ENCODE measurements at regions of chr16 and their contacts with region 1.

Region 1: GRCh38 chr16:2874912-2875362 is 8.1 kb upstream of the FLYWCH2 start:
- DNase-seq: peak; percentile 60 to 87
- ATAC-seq: peak; percentile 98 to 100 (median 100)
- H3K4me3 ChIP-seq: no peak overlapping the region
- H3K4me3 Mint-ChIP-seq: no peak overlapping the region
- H3K27ac ChIP-seq: no peak overlapping the region
- H3K27ac Mint-ChIP-seq: no peak overlapping the region
- H3K4me1 ChIP-seq: peaks cover 10% of the 10 kb centered on the region
- H3K4me1 Mint-ChIP-seq: no peaks in the 10 kb centered on the region
- H3K27me3 ChIP-seq: no peaks in the 10 kb centered on the region
- H3K27me3 Mint-ChIP-seq: no peaks in the 10 kb centered on the region
- CTCF ChIP-seq: peak; percentile 90

Region 2: GRCh38 chr16:2720719-2721633 is 154.0 kb before region 1 on chr16:
- intact Hi-C with region 1: no loop called
- DNase-seq: peak; percentile 79 to 93
- ATAC-seq: peak; percentile 92 to 96 (median 92)
- H3K4me3 ChIP-seq: peak overlapping the region; percentile 48
- H3K4me3 Mint-ChIP-seq: peak overlapping the region; percentile 73
- H3K27ac ChIP-seq: peak overlapping the region; percentile 29
- H3K27ac Mint-ChIP-seq: peak overlapping the region in 1 of 2 donors; percentile 83
- H3K4me1 ChIP-seq: peaks cover 13% of the 10 kb centered on the region
- H3K4me1 Mint-ChIP-seq: no peaks in the 10 kb centered on the region
- H3K27me3 ChIP-seq: no peaks in the 10 kb centered on the region
- H3K27me3 Mint-ChIP-seq: peaks cover 4 to 7% of the 10 kb centered on the region in 2 donors
- CTCF ChIP-seq: peak; percentile 92

Region 3: DNA sequence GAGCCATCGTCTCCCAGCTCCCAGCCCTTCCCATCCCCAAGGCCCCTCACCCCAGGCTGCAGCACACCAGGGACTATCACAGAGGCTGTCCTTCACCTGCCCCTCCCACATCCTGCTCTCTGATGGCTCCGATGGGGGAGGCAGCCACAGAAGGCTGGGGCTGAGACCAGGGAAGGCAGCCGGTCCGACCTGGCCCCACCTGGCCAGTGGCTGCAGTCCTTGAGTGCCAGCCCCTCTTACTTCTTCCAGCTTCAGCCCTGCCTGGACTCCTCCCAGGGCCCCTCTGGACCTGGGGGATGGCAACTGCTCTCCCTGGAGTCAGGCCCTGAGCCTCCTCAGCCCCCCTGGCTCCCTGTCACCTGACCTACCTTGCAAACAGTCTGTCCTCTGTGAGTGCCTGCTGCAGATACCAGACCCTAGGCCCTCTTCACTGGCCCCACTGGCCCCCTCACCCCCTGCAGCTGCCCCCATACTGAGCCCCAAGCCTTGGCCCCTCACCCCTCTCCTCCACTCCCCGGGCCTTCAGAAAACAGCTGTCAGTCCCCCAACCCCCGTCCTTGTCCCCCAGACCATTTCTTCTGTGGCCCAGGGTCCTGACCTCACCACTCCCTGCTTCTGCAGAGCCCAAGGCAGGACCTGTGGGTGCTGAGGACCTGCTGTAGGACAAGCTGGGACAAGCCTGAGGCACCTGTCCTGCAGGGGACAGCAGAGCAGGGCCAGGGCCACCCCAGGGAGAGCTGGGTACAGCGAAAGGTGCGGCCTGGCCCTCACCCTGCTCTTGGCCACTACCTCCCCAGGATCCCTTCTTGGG is 135.1 kb before region 1 on chr16:
- intact Hi-C with region 1: no loop called
- DNase-seq: no peak
- ATAC-seq: no peak
- H3K4me3 ChIP-seq: no peak overlapping the region
- H3K4me3 Mint-ChIP-seq: no peak overlapping the region
- H3K27ac ChIP-seq: no peak overlapping the region
- H3K27ac Mint-ChIP-seq: no peak overlapping the region
- H3K4me1 ChIP-seq: no peaks in the 10 kb centered on the region
- H3K4me1 Mint-ChIP-seq: no peaks in the 10 kb centered on the region
- H3K27me3 ChIP-seq: no peaks in the 10 kb centered on the region
- H3K27me3 Mint-ChIP-seq: no peaks in the 10 kb centered on the region
- CTCF ChIP-seq: no peak

Region 4: DNA sequence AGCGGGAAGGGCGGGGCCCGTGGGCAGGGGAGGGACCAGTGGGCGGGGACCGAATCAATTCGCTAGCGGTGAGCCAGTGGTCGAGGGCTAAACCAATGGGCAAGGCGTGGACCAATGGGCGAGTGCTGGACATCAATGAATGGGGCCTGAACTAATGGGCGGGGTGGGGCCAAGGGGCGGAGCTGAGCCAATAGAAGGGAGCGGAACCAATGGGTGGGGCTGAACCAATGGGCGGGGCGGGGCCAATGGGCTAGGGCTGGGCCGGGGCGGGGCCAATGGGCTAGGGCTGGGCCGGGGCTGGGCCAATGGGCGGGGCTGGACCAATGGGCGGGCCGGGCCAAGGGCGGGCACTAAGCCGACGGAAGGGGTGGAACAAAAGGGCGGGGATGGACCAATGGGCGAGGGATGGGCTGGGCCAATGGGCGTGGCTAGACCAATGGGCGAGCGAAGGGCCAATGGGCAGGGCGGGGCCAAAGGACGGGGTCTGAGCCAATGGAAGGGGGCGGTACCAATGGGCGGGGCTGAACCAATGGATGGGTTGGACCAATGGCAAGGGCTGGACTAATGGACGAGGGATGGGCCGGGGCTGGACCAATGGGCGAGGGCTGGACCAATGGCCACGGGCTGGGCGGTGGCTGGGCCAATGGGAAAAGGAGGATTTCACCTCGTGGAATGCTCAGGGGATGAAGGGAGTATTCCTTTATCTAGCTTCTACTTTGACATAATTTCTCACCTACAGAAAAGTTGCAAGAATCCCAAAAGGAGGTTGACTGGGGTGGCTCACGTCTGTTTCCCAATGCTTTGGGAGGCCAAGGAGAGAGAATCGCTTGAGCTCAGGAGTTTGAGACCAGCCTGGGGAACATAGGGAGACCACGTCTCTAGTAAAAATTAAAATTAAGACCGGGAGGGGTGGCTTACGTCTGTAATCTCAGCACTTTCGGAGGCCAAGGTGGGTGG is 30.8 kb after region 1 on chr16:
- intact Hi-C with region 1: no loop called
- DNase-seq: peak; percentile 91 to 96
- ATAC-seq: peak; percentile 79 to 92 (median 82)
- H3K4me3 ChIP-seq: peak overlapping the region; percentile 83
- H3K4me3 Mint-ChIP-seq: peak overlapping the region; percentile 70
- H3K27ac ChIP-seq: peak overlapping the region; percentile 75
- H3K27ac Mint-ChIP-seq: peak overlapping the region; percentile 90 to 93
- H3K4me1 ChIP-seq: peaks cover 32% of the 10 kb centered on the region
- H3K4me1 Mint-ChIP-seq: peaks cover 20 to 33% of the 10 kb centered on the region in 2 donors
- H3K27me3 ChIP-seq: no peaks in the 10 kb centered on the region
- H3K27me3 Mint-ChIP-seq: no peaks in the 10 kb centered on the region
- CTCF ChIP-seq: no peak

Region 5: DNA sequence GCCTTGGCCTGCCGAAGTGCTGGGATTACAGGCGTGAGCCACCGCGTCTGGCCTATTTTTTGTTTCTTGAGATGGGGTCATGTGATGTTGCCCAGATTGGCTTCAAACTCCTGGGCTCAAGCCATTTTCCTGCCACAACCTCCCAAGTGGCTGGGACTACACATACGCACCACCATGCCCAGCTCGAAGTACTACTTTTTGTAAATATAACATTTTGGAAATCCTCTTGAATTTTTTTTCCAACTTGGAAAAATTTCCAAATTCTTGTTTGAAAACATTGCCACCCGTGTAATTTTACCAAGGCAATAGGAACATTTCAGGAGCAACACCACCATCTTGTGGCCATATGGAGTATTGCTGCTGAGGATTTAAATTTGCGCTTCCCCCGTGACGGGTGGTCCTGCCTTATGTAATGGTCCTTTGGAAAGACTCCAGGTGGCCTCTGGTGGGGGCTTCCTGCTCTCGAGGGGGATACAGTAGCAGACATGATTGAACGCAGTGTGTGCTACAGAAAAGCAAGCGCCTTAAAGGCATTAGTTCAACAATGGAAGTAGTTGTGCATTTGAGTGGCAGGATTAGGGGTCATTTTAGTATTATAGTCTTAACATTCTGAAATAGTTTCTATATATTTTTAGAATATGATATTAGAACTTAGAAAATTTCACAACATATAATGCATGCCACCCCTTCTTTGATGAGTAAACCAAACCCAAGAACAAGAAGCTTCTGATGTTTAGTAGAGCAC is 44.7 kb after region 1 on chr16:
- intact Hi-C with region 1: loop called (anchors 2 kb)
- DNase-seq: peak; percentile 51 to 88
- ATAC-seq: peak; percentile 76 to 97 (median 78)
- H3K4me3 ChIP-seq: no peak overlapping the region
- H3K4me3 Mint-ChIP-seq: no peak overlapping the region
- H3K27ac ChIP-seq: no peak overlapping the region
- H3K27ac Mint-ChIP-seq: peak overlapping the region; percentile 58 to 83
- H3K4me1 ChIP-seq: peaks cover 3% of the 10 kb centered on the region
- H3K4me1 Mint-ChIP-seq: peaks cover 5 to 7% of the 10 kb centered on the region in 2 donors
- H3K27me3 ChIP-seq: no peaks in the 10 kb centered on the region
- H3K27me3 Mint-ChIP-seq: no peaks in the 10 kb centered on the region
- CTCF ChIP-seq: peak; percentile 89

Measured in natural killer cell (primary cell).